ENCODE measurements at regions of chr1 and their contacts with region 1.

Region 1: DNA sequence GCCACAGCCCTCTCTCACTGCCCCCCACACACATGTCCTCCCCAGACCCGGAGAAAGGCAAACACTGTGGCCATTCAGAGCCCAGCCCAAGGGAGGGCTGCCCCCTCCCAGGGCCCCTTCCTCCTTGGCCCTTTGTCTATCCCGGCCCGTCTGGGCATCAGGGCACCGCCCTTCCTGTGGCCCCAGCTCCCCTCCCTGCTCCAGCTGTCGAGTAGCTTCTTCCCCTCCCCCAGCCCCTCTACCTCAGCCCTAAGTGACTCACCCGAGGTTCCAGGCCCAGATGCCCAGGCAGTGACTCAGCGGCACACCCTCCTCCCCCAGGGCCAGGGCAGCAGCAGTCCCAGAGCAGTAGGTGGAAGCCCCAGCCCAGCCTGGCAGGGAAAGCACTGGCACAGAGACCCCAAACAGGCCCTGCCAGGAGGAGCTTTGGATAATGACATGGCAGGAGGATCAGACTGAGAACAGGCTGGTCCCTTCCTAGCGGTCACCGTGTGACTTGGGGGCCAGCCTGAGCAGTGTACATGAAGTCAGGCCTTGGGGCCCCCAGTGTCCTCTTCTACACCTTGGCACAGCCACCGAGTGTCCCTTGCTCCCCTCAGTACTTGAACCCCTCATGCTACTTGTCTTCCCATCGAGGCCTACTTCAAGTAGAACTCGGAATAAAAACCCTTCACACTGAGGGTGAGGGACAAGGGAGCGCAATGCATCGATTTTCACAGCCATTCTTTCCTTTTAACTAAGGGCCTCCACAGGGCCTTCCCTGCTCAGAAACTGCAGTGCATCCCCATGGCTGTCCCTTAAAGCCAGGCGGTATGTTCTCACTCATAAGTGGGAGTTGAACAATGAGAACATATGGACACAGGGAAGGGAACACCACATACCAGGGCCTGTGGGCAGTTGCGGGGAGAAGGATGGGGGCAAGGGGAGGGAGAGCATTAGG is 1.1 kb upstream of the S100A2 start:
- DNase-seq: peak; percentile 100
- H3K4me3 Mint-ChIP-seq: peak overlapping the region; percentile 67
- H3K27ac Mint-ChIP-seq: peak overlapping the region; percentile 92
- H3K4me1 Mint-ChIP-seq: peaks cover 64% of the 10 kb centered on the region
- H3K27me3 Mint-ChIP-seq: no peaks in the 10 kb centered on the region
- CTCF ChIP-seq: no peak

Region 2: GRCh38 chr1:153510984-153511410 is 55.7 kb before region 1 on chr1:
- CTCF ChIA-PET with region 1: interaction called, 379 read pairs
- POLR2A ChIA-PET with region 1: interaction called, 110 read pairs
- intact Hi-C with region 1: loop called (anchors 1 kb)
- DNase-seq: peak; percentile 87
- H3K4me3 Mint-ChIP-seq: no peak overlapping the region
- H3K27ac Mint-ChIP-seq: peak overlapping the region; percentile 73
- H3K4me1 Mint-ChIP-seq: peaks cover 60% of the 10 kb centered on the region
- H3K27me3 Mint-ChIP-seq: no peaks in the 10 kb centered on the region
- CTCF ChIP-seq: peak; percentile 100

Region 3: DNA sequence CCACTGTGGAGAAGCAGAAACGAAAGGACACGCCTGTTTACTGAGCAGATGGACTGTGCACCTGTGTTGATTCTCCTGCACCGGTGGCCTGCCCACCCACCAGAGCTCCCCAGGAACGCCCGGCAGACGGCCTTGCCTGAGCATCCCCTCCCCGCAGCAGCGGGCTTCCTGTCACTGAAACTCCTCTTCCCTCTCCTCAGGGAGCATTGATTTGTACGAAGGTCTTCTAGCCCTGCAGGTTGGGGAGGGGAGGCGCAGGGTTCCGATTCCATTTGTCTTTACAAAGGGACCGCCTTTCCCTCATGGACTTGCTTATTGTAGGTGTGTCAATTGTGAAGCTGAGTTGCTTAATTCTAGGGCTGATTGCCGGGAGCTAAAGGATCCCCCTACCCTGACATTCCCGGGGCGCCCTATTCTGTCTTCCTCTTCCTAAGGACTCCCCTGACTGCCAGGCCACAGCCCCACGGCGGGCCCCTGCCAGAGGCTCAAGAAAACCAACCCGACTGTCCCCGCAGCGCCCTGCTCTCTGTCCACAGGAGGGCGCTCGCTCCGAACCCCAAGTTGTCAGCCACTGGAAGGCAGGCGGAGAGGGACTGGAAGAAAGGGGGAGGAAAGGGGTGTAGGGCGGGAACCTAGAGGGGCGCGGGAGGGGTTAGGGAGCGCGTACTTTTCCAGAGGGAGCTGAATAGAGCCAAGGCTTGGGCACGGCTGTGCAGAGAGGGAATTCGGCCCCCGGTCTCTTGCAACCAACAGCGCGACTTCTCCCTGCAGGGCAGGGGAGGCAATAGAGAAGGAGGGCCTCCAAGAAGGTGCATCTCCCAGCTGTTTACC is 33.7 kb before region 1 on chr1:
- CTCF ChIA-PET with region 1: interaction called, 224 read pairs
- POLR2A ChIA-PET with region 1: interaction called, 2,106 read pairs
- intact Hi-C with region 1: loop called (anchors 1 kb)
- DNase-seq: peak; percentile 97
- H3K4me3 Mint-ChIP-seq: peak overlapping the region; percentile 99
- H3K27ac Mint-ChIP-seq: peak overlapping the region; percentile 75
- H3K4me1 Mint-ChIP-seq: peaks cover 47% of the 10 kb centered on the region
- H3K27me3 Mint-ChIP-seq: no peaks in the 10 kb centered on the region
- CTCF ChIP-seq: peak; percentile 93

Region 4: GRCh38 chr1:153553830-153554541 is 12.7 kb before region 1 on chr1:
- CTCF ChIA-PET with region 1: interaction called, 35 read pairs
- POLR2A ChIA-PET with region 1: interaction called, 2,106 read pairs
- intact Hi-C with region 1: loop called (anchors 2 kb)
- DNase-seq: no peak
- H3K4me3 Mint-ChIP-seq: no peak overlapping the region
- H3K27ac Mint-ChIP-seq: peak overlapping the region; percentile 17
- H3K4me1 Mint-ChIP-seq: peaks cover 27% of the 10 kb centered on the region
- H3K27me3 Mint-ChIP-seq: no peaks in the 10 kb centered on the region
- CTCF ChIP-seq: no peak

Region 5: DNA sequence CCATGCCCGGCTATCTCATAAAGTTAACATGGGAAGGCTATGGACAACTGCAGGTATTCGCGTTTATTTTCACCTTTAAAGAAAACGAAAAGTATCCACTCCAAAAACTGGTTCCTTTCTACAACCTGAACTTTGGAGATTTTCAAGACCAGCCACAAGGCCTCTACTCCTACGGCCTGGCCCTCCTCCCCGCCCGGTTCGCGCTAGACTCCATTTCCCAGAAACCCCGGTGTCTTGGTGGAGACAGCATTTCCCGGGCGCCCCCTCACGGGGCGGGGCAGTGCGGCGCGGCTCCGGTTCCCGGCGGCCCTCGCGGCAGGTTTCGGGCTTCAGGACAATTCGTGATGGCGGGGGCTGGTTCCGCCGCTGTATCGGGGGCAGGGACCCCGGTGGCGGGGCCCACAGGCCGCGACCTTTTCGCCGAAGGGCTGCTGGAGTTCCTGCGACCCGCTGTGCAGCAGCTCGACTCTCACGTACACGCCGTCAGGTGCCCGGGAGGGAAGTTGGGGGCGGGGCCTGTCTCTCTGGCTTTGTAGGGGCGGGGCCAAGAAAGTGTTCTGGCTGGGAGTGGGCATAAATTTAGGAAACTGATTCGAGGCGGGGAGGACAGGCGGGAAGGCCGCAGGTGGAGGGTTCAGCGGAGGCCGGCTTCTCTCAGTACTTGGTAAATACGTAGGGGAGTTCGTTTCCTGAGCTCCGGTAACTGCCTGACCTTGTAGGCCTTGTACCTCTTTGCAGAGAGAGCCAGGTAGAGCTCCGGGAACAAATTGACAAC is 91.9 kb after region 1 on chr1 and contains the start of gene SNAPIN:
- CTCF ChIA-PET with region 1: interaction called, 18 read pairs
- POLR2A ChIA-PET with region 1: interaction called, 12 read pairs
- intact Hi-C with region 1: loop called (anchors 1 kb)
- DNase-seq: peak; percentile 95
- H3K4me3 Mint-ChIP-seq: peak within 1 kb of the TSS; percentile 92
- H3K27ac Mint-ChIP-seq: peak within 1 kb of the TSS; percentile 91
- H3K4me1 Mint-ChIP-seq: peaks cover 5% of the 10 kb centered on the region
- H3K27me3 Mint-ChIP-seq: no peaks in the 10 kb centered on the region
- CTCF ChIP-seq: no peak
- total RNA-seq, gene SNAPIN: 55.9 and 63.7 TPM in 2 replicates

Region 6: DNA sequence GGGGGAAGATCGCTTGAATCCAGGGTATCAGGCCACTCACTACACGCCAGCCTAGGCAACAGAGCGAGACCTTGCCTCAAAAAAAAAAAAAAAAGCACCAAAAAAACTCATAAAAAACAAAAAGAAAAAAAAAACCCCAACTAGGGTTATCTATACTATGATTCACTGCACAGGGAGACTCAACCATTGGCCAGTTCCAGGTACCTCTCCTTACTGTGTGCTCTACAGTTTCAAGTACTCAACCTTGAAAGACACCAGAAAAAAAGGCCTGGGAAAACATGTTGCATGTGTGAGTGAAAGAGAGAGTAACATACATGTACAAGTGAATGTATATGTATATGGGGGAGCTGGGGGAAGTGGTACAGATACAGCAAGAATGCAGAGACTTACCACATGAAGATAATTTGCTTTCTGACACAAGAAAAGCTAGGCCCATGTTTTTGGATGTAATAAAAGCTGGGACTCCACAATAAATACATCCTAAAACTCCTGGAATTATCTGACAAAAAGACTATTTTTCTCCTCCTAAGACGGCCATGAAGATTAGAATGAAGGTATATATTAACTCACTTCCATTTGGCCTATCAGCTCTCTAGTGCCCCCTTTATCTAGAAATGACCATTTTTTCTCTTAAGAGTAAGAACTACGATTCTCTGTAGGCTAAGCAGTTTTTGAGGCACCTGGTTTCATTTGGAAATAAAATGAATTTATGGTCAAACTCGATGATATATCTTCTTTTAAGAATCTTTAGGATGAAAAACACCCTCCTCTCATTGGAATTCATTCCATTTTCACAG is 260.7 kb after region 1 on chr1:
- CTCF ChIA-PET with region 1: no interaction called
- POLR2A ChIA-PET with region 1: no interaction called
- intact Hi-C with region 1: no loop called
- DNase-seq: no peak
- H3K4me3 Mint-ChIP-seq: no peak overlapping the region
- H3K27ac Mint-ChIP-seq: peak overlapping the region; percentile 31
- H3K4me1 Mint-ChIP-seq: peaks cover 5% of the 10 kb centered on the region
- H3K27me3 Mint-ChIP-seq: no peaks in the 10 kb centered on the region
- CTCF ChIP-seq: peak; percentile 12

Region 7: GRCh38 chr1:153977250-153978240 is 410.8 kb after region 1 on chr1 and contains the start of gene JTB:
- CTCF ChIA-PET with region 1: no interaction called
- POLR2A ChIA-PET with region 1: interaction called, 10 read pairs
- intact Hi-C with region 1: no loop called
- DNase-seq: peak; percentile 93
- H3K4me3 Mint-ChIP-seq: peak within 1 kb of the TSS; percentile 98
- H3K27ac Mint-ChIP-seq: peak within 1 kb of the TSS; percentile 96
- H3K4me1 Mint-ChIP-seq: peaks cover 23% of the 10 kb centered on the region
- H3K27me3 Mint-ChIP-seq: no peaks in the 10 kb centered on the region
- CTCF ChIP-seq: no peak
- total RNA-seq, gene JTB: 194 and 224 TPM in 2 replicates